Dendritic cell treated with granulocyte-macrophage colony-stimulating factor and Interleukin-4, amounts not matched to agents 40 ng/mL and 50 ng/mL, for 4 days (primary cell): ENCODE measurements at regions of chr13 and their contacts with region 1.

Region 1: DNA sequence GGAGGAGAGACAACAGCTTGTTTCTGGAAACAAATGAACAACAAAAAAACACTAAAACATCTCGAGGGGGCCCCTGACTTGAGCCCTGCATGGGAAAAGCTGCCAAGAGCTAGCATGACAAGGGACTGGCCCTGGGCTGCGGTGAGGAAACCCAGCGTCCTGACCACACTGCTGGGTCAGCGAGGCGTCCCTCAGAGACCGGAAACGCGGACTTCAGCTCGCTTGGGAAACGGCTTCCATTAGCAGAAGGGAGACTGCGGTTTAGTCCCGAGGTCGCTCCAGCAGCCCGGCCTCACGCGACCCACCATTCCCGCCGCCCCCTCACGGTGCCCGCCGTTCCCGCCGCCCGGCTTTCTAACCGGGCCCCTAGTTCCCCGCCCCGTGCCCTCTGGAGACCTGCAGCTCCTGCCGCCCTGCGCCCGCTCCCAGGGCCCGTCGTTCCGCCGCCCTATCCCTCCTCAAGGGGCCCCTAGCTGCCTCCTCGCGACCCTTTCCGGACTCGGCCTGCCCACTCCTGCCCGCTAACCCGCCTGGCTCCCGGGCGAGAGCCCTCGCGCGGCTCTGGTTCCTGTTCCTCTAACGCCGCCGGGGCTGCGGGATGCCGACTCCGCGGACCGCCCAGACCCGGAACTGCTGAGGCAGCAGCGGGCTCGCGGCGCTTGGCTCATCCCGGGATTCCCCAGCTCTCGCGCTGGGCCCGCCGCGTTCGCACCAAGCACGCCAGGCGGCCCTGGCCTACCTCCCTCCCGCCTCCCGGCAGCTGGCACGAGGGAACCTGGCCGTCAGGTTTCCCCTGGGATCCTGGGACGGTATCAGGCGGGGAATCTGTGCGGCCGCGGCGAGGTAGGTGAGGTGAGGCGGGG is at the start of gene CCDC122:
- H3K4me3 Mint-ChIP-seq: peak within 1 kb of the TSS; percentile 98
- H3K27ac Mint-ChIP-seq: peak within 1 kb of the TSS; percentile 100
- H3K4me1 Mint-ChIP-seq: peaks cover 43% of the 10 kb centered on the region
- H3K27me3 Mint-ChIP-seq: peaks cover 7% of the 10 kb centered on the region

Region 2: GRCh38 chr13:42271337-42272114 is 1607.6 kb before region 1 on chr13:
- intact Hi-C with region 1: loop called (anchors 5 kb)
- H3K4me3 Mint-ChIP-seq: peak overlapping the region; percentile 93
- H3K27ac Mint-ChIP-seq: peak overlapping the region; percentile 95
- H3K4me1 Mint-ChIP-seq: peaks cover 48% of the 10 kb centered on the region
- H3K27me3 Mint-ChIP-seq: no peaks in the 10 kb centered on the region

Region 3: DNA sequence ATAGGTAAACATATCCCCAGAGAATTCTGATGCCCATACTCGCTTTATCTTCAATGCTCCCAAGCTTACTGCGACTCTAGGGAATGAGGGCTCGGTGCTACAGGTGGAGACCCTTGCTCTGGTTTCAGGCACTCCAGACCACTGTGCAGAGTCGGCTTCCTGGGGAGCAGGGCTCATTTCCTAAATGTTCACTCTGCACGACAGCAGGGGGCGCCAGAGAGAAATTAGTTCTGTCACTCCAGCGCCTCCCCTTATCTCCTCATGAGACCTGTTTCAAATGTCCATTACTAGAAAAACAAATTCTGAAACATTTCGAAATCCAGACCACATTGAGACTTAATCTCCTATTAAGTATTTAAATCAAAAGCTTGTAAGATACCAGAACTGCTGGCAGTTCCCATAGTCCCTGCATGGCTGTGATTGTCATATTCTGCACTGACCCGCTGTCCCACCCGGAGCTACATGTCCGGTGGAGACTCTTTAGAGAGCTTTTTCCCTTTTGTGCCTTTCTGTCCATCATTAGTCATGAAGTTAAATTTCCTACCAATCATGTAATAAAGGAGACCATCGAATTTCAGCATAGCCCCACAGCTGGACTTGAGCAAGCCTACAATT is 909.5 kb before region 1 on chr13:
- intact Hi-C with region 1: loop called (anchors 5 kb)
- H3K4me3 Mint-ChIP-seq: no peak overlapping the region
- H3K27ac Mint-ChIP-seq: no peak overlapping the region
- H3K4me1 Mint-ChIP-seq: peaks cover 7% of the 10 kb centered on the region
- H3K27me3 Mint-ChIP-seq: no peaks in the 10 kb centered on the region

Region 4: DNA sequence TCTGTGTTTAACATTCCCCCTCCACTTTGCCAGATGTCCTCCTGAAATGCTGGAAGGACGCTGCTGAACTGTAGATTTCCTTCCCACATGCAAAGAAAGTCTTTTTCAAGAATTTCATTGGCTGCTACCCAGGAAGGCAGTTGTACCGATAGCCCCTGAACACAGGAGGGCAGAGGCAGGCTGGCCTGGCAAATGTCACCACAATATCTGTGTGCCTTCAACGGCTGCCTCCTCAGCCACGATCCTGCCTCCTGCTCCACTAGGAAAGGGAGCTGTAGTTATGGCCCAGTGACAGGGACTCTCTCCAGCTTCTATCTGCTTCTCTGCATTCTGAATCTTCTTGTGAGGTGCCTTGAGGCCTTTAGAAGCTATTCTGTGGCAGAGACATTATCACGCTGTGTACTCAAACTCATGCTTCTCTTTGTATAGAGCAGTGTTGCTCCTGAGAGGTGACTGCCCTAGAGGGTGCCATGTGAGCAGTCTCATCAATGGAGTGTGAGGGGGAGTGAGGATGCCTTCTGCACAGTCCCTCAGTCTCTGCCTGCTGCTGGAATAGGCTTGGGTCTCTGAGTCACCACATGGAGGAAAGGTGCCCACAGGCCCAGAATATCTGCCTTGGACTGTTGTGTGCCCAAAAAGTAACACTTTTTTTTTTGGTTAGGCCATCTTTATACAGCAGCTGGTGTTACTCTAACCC is 575.9 kb before region 1 on chr13:
- intact Hi-C with region 1: loop called (anchors 5 kb)
- H3K4me3 Mint-ChIP-seq: no peak overlapping the region
- H3K27ac Mint-ChIP-seq: no peak overlapping the region
- H3K4me1 Mint-ChIP-seq: peaks cover 19% of the 10 kb centered on the region
- H3K27me3 Mint-ChIP-seq: peaks cover 19% of the 10 kb centered on the region

Region 5: DNA sequence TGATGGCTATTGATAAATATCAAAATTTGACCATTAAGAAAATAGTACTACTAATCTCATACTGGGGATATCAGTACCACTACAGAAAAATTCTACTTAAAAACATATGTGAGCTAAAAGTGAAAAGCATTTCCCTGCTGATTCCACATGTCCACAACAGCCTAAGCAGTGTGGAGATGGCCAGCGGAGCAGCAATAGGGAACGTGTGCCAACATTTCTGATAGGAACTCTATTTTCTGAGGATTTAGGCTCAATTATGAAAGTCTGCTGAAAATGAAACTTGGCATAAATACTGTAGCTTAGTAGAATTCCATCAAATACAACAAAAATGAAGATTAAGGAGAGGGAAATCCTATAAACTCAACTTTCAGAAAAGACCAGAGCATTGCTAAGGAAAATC is 404.0 kb before region 1 on chr13:
- intact Hi-C with region 1: loop called (anchors 5 kb)
- H3K4me3 Mint-ChIP-seq: no peak overlapping the region
- H3K27ac Mint-ChIP-seq: no peak overlapping the region
- H3K4me1 Mint-ChIP-seq: peaks cover 23% of the 10 kb centered on the region
- H3K27me3 Mint-ChIP-seq: no peaks in the 10 kb centered on the region

Region 6: DNA sequence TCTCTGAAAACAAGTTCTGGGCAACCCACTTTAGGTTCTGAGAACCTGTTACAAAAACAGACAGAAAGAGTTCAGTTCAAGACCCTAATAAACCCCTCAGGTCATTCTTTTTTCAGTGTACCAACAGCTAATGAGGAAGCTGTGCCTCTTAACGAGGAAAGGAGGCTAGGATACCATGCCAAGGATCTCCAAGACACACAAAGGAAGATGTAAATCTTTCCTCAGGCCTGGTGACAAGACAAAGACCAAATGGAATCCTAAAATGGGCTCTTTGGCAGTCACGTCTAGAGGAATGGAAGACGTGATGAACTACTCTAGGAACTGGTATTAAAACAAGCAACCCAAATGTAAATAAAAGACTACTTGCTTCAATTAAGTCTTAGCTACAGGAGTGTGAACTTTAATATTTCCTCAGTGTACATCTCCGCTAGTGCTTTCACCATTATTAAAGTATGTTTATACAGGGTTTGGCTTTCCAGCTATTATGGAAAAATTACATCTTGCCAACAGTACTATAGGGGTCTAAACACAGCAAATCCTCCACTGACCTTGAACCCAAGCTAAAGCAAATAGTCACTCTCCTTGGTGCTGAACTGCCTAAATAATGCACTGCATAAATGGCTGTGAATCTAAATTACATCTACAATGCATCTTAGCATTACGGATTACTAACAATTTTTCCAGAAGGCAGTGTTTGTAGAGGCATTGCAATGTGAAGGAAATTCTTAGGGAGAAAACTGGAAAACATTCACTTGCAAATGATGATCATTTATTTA is 134.7 kb before region 1 on chr13:
- intact Hi-C with region 1: no loop called
- H3K4me3 Mint-ChIP-seq: no peak overlapping the region
- H3K27ac Mint-ChIP-seq: no peak overlapping the region
- H3K4me1 Mint-ChIP-seq: no peaks in the 10 kb centered on the region
- H3K27me3 Mint-ChIP-seq: peaks cover 2% of the 10 kb centered on the region

Region 7: DNA sequence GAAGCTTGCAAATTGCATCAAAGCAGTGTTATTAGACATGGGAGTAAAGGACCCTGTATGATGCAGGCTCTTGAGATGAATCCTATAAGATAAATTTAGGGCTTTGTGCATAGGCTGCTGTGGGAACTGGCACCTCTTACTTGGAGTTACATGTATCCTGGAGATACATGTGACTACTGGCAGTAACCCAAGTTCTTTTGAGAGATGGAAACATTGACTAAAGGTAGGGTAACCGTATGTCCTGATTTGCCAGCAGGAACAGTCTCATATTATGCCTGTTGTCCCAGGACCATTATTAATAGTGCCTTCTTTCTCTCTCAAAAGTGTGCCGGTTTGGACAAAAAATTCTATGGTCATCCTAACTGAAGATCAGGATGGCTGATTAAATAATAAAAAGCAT is 196.0 kb after region 1 on chr13:
- intact Hi-C with region 1: no loop called
- H3K4me3 Mint-ChIP-seq: no peak overlapping the region
- H3K27ac Mint-ChIP-seq: no peak overlapping the region
- H3K4me1 Mint-ChIP-seq: no peaks in the 10 kb centered on the region
- H3K27me3 Mint-ChIP-seq: peaks cover 9% of the 10 kb centered on the region

Region 8: GRCh38 chr13:44577236-44578066 is 698.3 kb after region 1 on chr13:
- intact Hi-C with region 1: loop called (anchors 10 kb)
- H3K4me3 Mint-ChIP-seq: peak overlapping the region; percentile 83
- H3K27ac Mint-ChIP-seq: peak overlapping the region; percentile 98
- H3K4me1 Mint-ChIP-seq: peaks cover 43% of the 10 kb centered on the region
- H3K27me3 Mint-ChIP-seq: peaks cover 17% of the 10 kb centered on the region